ENCODE measurements at regions of chr3 and their contacts with region 1.

Region 1: DNA sequence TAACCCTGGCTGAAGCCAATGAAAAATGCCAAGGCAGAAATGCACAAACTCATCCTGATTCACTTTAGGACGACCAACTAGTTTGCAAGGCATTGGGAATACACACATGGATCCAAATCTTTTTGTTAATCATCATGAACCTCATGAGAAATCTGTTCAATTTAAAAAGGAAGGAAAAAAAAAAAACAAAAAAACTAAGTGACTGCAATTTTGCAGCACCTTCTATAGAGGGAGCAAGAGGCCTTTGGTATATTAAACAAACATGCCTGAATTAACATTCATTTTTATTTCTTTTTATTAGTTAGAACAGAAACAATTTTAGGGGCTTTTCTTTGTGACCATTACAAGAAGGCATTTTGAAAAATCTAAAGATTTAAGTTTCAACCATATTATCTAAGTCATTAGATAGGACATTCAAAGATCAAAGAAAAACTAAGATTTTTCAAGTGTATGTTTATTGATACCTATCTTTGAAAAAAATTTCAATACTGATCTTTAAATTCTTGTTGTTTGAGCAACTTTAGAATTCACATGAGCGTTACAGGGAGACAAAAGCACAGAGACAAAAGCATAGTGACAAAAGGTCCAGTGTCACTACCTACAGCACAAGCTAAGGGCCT is 182.4 kb downstream of the CBLB start:
- DNase-seq: no peak

Region 2: DNA sequence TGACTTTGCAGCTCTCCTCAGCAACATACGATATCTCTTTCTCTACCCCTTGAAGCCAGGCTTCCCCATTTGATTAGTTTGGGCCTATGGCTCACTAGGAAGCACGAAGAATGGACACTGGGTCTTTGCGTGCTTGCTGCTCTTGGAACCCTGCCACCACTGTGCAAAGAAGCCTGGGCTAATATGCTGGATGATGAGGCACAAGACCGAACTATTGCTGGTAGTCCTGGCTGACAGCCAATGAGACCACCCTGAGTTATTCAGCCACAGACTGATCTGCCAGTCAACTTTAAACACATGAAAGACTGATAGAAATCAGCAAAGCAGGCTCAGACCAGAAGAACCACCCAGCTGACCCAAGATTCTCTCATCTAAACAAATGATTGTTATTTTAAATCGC is 67.8 kb before region 1 on chr3:
- intact Hi-C with region 1: no loop called
- DNase-seq: no peak

Region 3: GRCh38 chr3:105868742-105869530 is 182.5 kb after region 1 on chr3 and contains the start of gene CBLB:
- intact Hi-C with region 1: loop called (anchors 10 kb)
- DNase-seq: peak; percentile 81 to 99 (median 90)

Region 4: GRCh38 chr3:106609666-106610301 is 923.4 kb after region 1 on chr3:
- intact Hi-C with region 1: loop called (anchors 2 kb)
- DNase-seq: peak in 7 of 10 donors; percentile 15 to 90 (median 49)

Region 5: GRCh38 chr3:107117922-107118536 is 1431.6 kb after region 1 on chr3:
- intact Hi-C with region 1: loop called (anchors 5 kb)
- DNase-seq: peak in 9 of 10 donors; percentile 31 to 91 (median 57)